ENCODE measurements at regions of chr20 and their contacts with region 1.

Region 1: GRCh38 chr20:3407771-3408637 is 535 bp upstream of the DNAAF9 start:
- DNase-seq: peak; percentile 77
- H3K4me3 Mint-ChIP-seq: peak overlapping the region; percentile 98
- H3K27ac Mint-ChIP-seq: peak overlapping the region; percentile 91
- H3K4me1 Mint-ChIP-seq: peaks cover 36% of the 10 kb centered on the region
- H3K27me3 Mint-ChIP-seq: peaks cover 1% of the 10 kb centered on the region

Region 2: GRCh38 chr20:3420211-3420707 is 12.3 kb after region 1 on chr20:
- CTCF ChIA-PET with region 1: interaction called, 7 read pairs
- POLR2A ChIA-PET with region 1: interaction called, 45 read pairs
- DNase-seq: peak; percentile 78
- H3K4me3 Mint-ChIP-seq: no peak overlapping the region
- H3K27ac Mint-ChIP-seq: peak overlapping the region; percentile 82
- H3K4me1 Mint-ChIP-seq: peaks cover 16% of the 10 kb centered on the region
- H3K27me3 Mint-ChIP-seq: peaks cover 6% of the 10 kb centered on the region

Measured in activated CD4-positive, alpha-beta memory T cell treated with anti-CD3 and anti-CD28 coated beads, Interleukin-2, amount 10 ng/mL, durations not matched to agents 7 days and 5 days (primary cell).